Right cardiac atrium (tissue), 5 donors: ENCODE measurements at regions of chr19 and their contacts with region 1.

Region 1: GRCh38 chr19:7522072-7522922 is at the start of gene MCOLN1:
- DNase-seq: peak; percentile 100
- ATAC-seq: peak; percentile 92 to 93
- H3K4me3 ChIP-seq: peak within 1 kb of the TSS; percentile 81
- H3K27ac ChIP-seq: peak within 1 kb of the TSS; percentile 34
- H3K4me1 ChIP-seq: peaks cover 8% of the 10 kb centered on the region
- H3K27me3 ChIP-seq: no peaks in the 10 kb centered on the region
- total RNA-seq, gene MCOLN1: 19.5 to 24.4 (median 21.8) TPM

Region 2: DNA sequence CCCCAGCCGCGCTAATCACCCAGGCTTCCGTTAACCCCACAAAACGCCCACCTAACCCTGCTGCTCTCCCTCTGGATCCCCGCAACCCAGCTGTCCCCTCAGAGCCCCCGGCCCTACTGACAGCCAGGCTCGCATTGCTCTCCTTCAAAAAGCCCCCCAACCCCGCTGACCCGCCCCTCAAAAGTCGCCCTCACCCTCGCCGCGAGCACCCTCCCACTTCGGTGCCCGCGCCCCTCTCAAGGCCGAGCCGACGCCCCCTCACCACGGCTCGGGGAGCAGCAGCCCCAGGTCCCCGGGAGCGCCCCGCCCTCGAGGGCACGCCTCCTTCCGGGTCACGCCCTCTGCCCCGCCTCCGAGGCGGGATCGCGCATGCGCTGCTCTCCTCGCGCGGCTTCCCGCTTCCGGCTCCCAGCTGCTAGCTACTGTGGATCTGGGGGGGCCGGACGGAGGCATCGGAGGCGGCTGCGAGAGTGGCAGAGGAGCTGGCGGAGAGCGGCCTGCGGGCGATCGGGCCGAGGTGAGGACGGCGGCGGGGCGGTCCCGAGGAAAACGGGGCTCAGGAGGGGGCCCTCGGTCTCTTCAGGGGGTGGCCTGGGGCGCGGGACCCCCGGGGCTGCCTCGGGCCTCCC is 127.5 kb before region 1 on chr19:
- intact Hi-C with region 1: loop called in 1 of 4 experiments (anchors 10 kb)
- DNase-seq: peak; percentile 88 to 96 (median 95)
- ATAC-seq: peak; percentile 98 to 99
- H3K4me3 ChIP-seq: peak overlapping the region; percentile 84
- H3K27ac ChIP-seq: no peak overlapping the region
- H3K4me1 ChIP-seq: peaks cover 5% of the 10 kb centered on the region
- H3K27me3 ChIP-seq: no peaks in the 10 kb centered on the region